Sigmoid colon (tissue), 7 donors: ENCODE measurements at regions of chr9 and their contacts with region 1.

Region 1: DNA sequence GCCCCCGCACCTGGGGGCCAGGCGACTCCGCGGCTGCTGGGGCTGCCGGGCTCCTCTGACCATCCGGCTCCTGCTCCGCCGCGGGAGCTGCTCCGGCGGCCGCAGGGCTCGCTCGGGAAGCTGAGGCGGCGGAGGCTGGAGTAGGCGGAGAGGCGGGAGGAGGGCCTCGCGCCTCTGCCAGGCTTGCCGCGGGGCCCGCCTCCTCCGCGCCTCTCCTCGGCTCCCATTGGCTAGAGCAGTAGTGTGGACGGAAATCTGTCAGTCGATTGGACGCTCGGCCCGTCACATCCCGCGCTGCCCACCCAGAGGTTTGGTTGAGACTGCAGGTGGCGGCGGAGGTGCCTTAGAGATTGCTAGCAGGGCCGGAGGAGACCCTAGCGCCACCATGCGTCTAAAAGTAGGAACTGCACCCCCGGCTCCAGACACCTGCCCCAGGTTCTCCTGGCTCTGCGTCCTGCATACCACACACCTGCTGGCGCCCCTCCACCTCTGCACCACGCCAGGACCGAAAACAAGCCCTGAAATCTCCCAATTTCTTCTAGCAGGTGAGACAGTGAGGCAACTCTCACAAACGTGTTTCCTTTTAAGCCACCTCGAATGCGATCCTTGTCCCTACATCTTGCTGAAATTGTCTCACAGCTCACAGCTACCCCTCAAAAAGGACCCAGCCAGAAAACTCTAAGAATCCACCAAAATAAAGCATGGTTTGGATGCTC is at the start of gene SCAI:
- DNase-seq: peak; percentile 100
- H3K4me3 ChIP-seq: peak within 1 kb of the TSS; percentile 73 to 96 (median 86)
- H3K27ac ChIP-seq: peak within 1 kb of the TSS; percentile 83 to 87 (median 84)
- H3K4me1 ChIP-seq: peaks cover 0 to 51% (median 30%) of the 10 kb centered on the region in 4 donors
- H3K27me3 ChIP-seq: no peaks in the 10 kb centered on the region
- CTCF ChIP-seq: peak; percentile 98 to 99 (median 99)
- EP300 ChIP-seq: no peak
- POLR2A ChIP-seq: no peak
- total RNA-seq, gene SCAI: 5.4 to 15.8 (median 11.4) TPM

Region 2: GRCh38 chr9:125189361-125190289 is 46.1 kb after region 1 on chr9 and contains the start of gene PPP6C:
- intact Hi-C with region 1: loop called (anchors 2 kb)
- DNase-seq: peak; percentile 98
- H3K4me3 ChIP-seq: peak within 1 kb of the TSS; percentile 78 to 100 (median 89)
- H3K27ac ChIP-seq: peak within 1 kb of the TSS; percentile 91 to 97 (median 94)
- H3K4me1 ChIP-seq: peaks cover 0 to 40% (median 34%) of the 10 kb centered on the region in 4 donors
- H3K27me3 ChIP-seq: no peaks in the 10 kb centered on the region
- CTCF ChIP-seq: peak; percentile 31 to 57 (median 44)
- EP300 ChIP-seq: peak in 1 of 4 donors; percentile 30
- POLR2A ChIP-seq: peak; percentile 79 to 89
- total RNA-seq, gene PPP6C: 24.9 to 34.6 (median 31.5) TPM

Region 3: DNA sequence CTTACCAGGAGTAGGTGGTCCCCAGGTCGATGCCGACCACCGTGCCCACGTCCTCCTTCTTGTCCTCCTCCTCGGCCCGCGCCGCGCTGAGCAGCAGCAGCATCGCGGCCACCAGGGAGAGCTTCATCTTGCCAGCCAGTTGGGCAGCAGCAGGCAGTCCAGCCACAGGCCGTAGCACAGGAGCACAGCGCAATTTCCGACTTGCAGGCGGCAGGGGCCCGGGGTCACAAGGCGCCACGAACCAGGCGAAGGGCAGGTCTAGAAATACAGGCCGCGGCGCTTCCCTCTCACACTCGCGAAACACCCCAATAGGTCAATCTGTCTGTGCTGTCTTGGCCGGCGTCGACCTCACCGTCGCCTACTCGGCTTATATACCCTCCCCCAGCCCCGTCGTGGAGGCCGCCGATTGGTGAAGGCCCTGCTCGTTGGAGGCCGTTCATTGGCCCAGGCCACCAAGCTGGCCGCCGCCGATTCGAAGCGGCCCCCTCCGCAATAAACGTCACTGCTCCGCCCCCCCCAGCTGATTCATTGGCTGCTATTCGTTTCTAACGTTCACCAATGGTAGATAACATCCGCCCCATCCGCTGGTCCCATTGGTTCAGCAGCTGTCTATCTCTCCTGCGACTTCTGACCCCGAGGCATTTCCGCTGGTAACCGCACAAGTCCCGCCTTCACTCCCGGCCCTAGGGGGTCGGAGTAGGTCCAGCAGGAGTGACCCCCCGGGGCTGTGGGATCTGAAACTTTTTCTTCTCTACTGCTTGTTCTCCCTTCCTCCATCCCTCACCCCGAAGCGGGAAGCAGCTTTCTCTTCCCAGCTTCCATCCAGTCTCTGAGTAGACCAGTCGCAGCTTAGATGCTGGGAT is 97.7 kb after region 1 on chr9 and contains the start of gene HSPA5:
- intact Hi-C with region 1: no loop called
- DNase-seq: peak; percentile 100
- H3K4me3 ChIP-seq: peak within 1 kb of the TSS; percentile 90 to 97 (median 96)
- H3K27ac ChIP-seq: peak within 1 kb of the TSS; percentile 94 to 100 (median 98)
- H3K4me1 ChIP-seq: peaks cover 0 to 49% (median 46%) of the 10 kb centered on the region in 4 donors
- H3K27me3 ChIP-seq: no peaks in the 10 kb centered on the region
- CTCF ChIP-seq: peak in 1 of 4 experiments; percentile 18
- EP300 ChIP-seq: no peak
- POLR2A ChIP-seq: peak; percentile 93 to 95
- total RNA-seq, gene HSPA5: 46.5 to 65.4 (median 58.7) TPM